Ascending aorta (tissue), 2 donors: ENCODE measurements at regions of chr2 and their contacts with region 1.

Region 1: DNA sequence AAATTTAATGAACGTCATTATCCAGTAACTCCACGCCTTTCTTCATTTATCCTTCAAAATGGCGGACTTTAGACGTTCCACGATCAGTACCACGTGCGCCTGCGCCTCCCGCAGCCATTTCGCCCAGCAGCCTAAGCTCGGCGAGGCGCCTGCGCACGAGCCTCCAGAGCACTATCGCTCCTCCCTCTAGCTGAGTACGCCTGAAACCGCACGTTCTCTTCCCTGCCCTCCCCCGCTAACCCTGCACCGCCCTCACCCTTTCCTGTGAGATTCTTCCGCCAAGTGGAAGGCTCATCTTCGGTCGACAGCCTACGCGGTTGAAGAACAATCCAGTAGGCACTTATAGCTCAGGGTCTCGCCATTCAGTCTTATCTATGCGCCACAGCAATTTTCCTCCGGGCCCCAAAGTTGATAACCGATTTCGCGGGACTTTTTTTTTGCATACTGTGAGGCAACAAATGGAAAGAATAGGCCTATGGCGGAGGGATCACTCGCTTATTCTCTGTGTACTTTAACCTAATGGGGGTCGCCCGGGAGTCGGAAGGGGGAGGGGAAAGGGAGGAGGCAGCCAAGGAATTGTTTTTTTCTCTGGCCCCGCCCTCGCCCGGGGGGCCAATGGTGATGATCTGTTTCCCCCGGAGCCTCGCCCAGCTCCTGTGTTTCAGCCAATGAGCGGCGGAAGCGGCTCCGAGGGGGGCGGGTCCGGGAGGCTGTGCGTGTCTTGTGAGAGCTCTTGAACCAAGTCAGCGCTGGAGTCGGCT is at the start of gene KDM3A:
- DNase-seq: peak; percentile 100
- H3K4me3 ChIP-seq: peak within 1 kb of the TSS; percentile 88 to 97
- H3K27ac ChIP-seq: peak within 1 kb of the TSS; percentile 94 to 99
- H3K4me1 ChIP-seq: peaks cover 3 to 30% of the 10 kb centered on the region in 2 donors
- H3K27me3 ChIP-seq: no peaks in the 10 kb centered on the region
- CTCF ChIP-seq: no peak
- total RNA-seq, gene KDM3A: 18.4 TPM

Region 2: GRCh38 chr2:86195055-86195807 is 245.6 kb before region 1 on chr2 and contains the start of gene IMMT:
- intact Hi-C with region 1: loop called (anchors 2 kb)
- DNase-seq: peak; percentile 67 to 95
- H3K4me3 ChIP-seq: peak within 1 kb of the TSS; percentile 89 to 91
- H3K27ac ChIP-seq: peak within 1 kb of the TSS; percentile 99
- H3K4me1 ChIP-seq: peaks cover 6 to 41% of the 10 kb centered on the region in 2 donors
- H3K27me3 ChIP-seq: no peaks in the 10 kb centered on the region
- CTCF ChIP-seq: no peak
- total RNA-seq, gene IMMT: 97.1 TPM

Region 3: GRCh38 chr2:86238354-86238753 is 202.5 kb before region 1 on chr2:
- intact Hi-C with region 1: no loop called
- DNase-seq: no peak
- H3K4me3 ChIP-seq: no peak overlapping the region
- H3K27ac ChIP-seq: no peak overlapping the region
- H3K4me1 ChIP-seq: peaks cover 0 to 7% of the 10 kb centered on the region in 2 donors
- H3K27me3 ChIP-seq: no peaks in the 10 kb centered on the region
- CTCF ChIP-seq: no peak

Region 4: DNA sequence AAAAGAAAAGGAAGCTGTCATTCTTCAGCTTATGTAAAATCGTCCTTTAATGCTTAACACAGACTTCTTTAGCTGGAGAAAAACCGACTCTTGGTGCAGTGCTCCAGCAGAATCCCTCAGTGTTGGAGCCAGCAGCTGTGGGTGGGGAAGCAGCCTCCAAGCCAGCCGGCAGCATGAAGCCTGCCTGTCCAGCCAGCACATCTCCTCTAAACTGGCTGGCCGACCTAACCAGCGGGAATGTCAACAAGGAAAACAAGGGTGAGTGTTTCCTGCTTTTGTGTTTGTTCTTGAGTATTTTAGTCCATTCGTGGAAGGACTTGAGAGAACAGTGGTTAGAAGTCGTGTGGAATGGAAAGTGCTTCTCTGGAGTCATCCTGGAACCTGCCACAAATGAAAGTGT is 39.3 kb after region 1 on chr2:
- intact Hi-C with region 1: loop called (anchors 5 kb)
- DNase-seq: no peak
- H3K4me3 ChIP-seq: peak overlapping the region in 1 of 2 donors; percentile 22
- H3K27ac ChIP-seq: peak overlapping the region; percentile 21 to 76
- H3K4me1 ChIP-seq: peaks cover 30 to 60% of the 10 kb centered on the region in 2 donors
- H3K27me3 ChIP-seq: no peaks in the 10 kb centered on the region
- CTCF ChIP-seq: no peak

Region 5: GRCh38 chr2:86562922-86563649 is 122.3 kb after region 1 on chr2 and contains the start of gene CHMP3:
- intact Hi-C with region 1: loop called (anchors 5 kb)
- DNase-seq: peak; percentile 94 to 98
- H3K4me3 ChIP-seq: peak within 1 kb of the TSS; percentile 70 to 84
- H3K27ac ChIP-seq: peak within 1 kb of the TSS; percentile 94 to 95
- H3K4me1 ChIP-seq: peaks cover 0 to 14% of the 10 kb centered on the region in 2 donors
- H3K27me3 ChIP-seq: no peaks in the 10 kb centered on the region
- CTCF ChIP-seq: no peak
- total RNA-seq, gene CHMP3: 69.3 TPM